ENCODE measurements at regions of chr10 and their contacts with region 1.

Region 1: DNA sequence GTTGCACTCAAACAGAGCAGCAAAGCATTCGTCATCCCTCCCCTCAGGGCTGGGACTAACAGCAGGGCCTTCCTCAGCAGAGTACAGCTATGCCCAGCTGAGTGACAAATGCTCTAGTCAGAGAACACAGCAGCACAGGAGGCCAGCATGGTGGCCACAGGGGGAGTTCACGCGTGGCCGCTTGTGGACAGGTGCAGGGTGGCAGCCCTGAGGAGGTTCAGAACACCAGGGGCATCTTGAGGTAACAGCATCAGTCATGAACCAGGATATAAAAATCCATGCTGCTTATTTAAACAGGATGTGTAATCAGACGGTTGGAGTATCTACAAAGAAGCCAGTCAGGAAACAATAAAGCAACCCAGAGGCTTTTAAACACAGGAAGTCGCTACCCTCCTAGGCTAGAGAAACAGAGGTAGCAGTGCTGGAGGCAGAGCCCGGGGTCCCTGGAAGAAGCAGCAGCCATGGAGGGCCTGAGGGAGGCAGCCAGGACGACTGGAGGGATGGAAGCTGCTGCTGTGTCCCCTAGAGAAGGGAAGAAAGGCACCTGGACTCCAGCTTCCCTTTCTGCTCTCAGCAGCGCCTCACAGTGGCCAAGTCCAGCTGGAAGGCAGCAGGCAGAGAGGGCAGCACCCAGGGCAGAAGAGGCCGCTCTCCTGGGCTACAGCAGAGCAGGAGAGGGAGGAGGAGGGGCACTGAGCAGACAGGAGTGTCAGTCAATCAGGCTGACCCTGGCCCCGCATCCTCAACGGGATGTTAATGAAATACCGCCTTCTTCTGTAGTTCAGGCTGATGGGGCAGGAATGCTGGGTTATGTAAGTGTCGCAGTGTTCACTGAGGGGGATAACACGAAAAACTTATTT is 70.8 kb upstream of the UCN3 start:
- DNase-seq: no peak
- ATAC-seq: peak; percentile 73
- H3K4me3 ChIP-seq: no peak overlapping the region
- H3K27ac ChIP-seq: no peak overlapping the region
- H3K4me1 ChIP-seq: no peaks in the 10 kb centered on the region
- H3K27me3 ChIP-seq: no peaks in the 10 kb centered on the region
- CTCF ChIP-seq: peak; percentile 35 to 45 (median 38); a peak in 5 of 6 replicates
- EP300 ChIP-seq: no peak
- POLR2A ChIP-seq: no peak
- RAD21 ChIP-seq: no peak

Region 2: DNA sequence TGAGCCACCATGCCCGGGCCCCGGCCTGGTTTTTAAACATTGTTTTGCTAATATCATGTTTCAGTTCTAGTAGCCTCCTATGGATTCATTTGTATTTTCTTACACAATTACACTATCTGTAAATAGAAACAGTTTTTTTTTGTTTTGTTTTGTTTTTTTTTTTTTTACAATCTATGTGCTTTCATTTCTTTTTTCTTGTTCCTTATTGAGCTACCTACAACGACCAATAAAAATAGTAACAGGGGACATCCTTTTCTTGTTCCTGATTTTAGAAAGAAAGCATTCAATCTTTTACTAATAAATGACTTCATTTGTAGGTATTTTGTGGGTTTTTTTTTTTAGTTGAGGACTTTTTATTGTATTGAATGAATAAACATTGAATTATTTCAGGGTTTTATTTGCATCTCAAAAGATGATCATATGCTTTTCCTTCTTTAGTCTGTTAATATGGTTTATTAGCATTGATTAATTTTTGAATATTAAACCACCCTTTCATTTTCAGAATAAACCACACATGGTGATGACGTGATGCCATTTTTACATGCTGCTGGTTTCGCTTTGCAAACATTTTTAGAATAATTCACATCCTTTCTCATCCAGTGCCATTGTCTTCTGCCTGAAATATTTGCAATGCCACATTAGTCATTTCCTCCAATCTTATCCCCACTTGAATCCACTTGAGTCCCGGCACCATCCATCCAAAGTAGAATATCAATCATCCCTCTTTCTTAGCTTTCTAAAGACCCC is 486.0 kb before region 1 on chr10:
- CTCF ChIA-PET with region 1: no interaction called
- POLR2A ChIA-PET with region 1: no interaction called
- RAD21 ChIA-PET with region 1: no interaction called
- SMC1A ChIA-PET with region 1: no interaction called
- in situ Hi-C with region 1: no loop called
- intact Hi-C with region 1: no loop called
- DNase-seq: no peak
- ATAC-seq: peak; percentile 38; the same call in 2 of the 3 replicates
- H3K4me3 ChIP-seq: no peak overlapping the region
- H3K27ac ChIP-seq: no peak overlapping the region
- H3K4me1 ChIP-seq: no peaks in the 10 kb centered on the region
- H3K27me3 ChIP-seq: no peaks in the 10 kb centered on the region
- CTCF ChIP-seq: no peak
- EP300 ChIP-seq: no peak
- POLR2A ChIP-seq: no peak
- RAD21 ChIP-seq: no peak

Region 3: GRCh38 chr10:5043716-5044115 is 250.2 kb before region 1 on chr10:
- CTCF ChIA-PET with region 1: no interaction called
- POLR2A ChIA-PET with region 1: no interaction called
- RAD21 ChIA-PET with region 1: no interaction called
- SMC1A ChIA-PET with region 1: no interaction called
- in situ Hi-C with region 1: no loop called
- intact Hi-C with region 1: no loop called
- DNase-seq: no peak
- ATAC-seq: no peak
- H3K4me3 ChIP-seq: no peak overlapping the region
- H3K27ac ChIP-seq: no peak overlapping the region
- H3K4me1 ChIP-seq: no peaks in the 10 kb centered on the region
- H3K27me3 ChIP-seq: no peaks in the 10 kb centered on the region
- CTCF ChIP-seq: no peak
- EP300 ChIP-seq: no peak
- POLR2A ChIP-seq: no peak
- RAD21 ChIP-seq: no peak

Region 4: DNA sequence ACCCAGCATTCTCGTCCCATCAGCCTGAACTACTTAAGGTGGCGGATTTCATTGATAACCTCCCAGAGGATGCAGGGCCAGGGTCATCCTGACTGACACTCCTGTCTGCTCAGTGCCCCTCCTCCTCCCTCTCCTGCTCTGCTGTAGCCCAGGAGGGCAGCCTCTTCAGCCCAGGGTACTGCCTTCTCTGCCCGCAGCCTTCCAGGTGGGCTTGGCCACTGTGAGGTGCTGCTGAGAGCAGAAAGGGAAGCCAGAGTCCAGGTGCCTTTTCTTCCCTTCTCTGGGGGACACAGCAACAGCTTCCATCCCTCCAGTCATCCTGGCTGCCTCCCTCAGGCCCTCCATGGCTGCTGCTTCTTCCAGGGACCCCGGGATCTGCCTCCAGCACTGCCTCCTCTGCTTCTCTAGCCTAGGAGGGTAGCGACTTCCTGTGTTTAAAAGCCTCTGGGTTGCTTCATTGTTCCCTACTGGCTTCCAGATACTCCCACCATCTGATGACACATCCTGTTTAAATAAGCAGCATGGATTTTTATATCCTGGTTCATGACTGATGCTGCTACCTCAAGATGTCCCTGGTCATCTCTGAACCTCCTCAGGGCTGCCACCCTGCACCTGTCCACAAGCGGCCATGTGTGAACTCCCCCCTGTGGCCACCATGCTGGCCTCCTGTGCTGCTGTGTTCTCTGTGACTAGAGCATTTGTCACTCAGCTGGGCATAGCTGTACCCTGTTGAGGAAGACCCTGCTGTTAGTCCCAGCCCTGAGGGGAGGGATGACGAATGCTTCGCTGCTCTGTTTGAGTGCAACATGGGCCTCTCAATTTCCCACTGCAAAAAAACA is 41.5 kb before region 1 on chr10:
- CTCF ChIA-PET with region 1: no interaction called
- POLR2A ChIA-PET with region 1: no interaction called
- RAD21 ChIA-PET with region 1: no interaction called
- SMC1A ChIA-PET with region 1: no interaction called
- in situ Hi-C with region 1: loop called (anchors 5 kb)
- intact Hi-C with region 1: no loop called
- DNase-seq: no peak
- ATAC-seq: no peak
- H3K4me3 ChIP-seq: no peak overlapping the region
- H3K27ac ChIP-seq: no peak overlapping the region
- H3K4me1 ChIP-seq: no peaks in the 10 kb centered on the region
- H3K27me3 ChIP-seq: no peaks in the 10 kb centered on the region
- CTCF ChIP-seq: no peak
- EP300 ChIP-seq: no peak
- POLR2A ChIP-seq: no peak
- RAD21 ChIP-seq: no peak

Region 5: DNA sequence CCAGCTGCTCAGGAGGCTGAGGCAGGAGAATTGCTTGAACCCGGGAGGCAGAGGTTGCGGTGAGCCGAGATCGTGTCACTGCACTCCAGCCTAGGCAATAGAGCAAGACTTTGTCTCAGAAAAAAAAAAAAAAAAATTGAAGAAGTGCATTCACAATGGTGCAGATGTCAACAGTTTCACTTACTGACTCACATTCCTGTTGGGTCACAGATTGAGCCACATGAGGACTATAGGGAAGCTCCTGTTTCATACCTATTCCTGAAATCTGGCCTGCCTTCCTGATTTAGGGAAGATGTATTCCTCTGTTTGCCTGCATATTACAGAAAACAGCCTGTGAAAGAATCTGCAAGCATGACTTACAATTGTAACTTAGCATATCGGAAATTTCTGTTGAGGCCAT is 19.1 kb before region 1 on chr10:
- CTCF ChIA-PET with region 1: no interaction called
- POLR2A ChIA-PET with region 1: no interaction called
- RAD21 ChIA-PET with region 1: no interaction called
- SMC1A ChIA-PET with region 1: no interaction called
- in situ Hi-C with region 1: no loop called
- intact Hi-C with region 1: no loop called
- DNase-seq: no peak
- ATAC-seq: no peak
- H3K4me3 ChIP-seq: no peak overlapping the region
- H3K27ac ChIP-seq: no peak overlapping the region
- H3K4me1 ChIP-seq: no peaks in the 10 kb centered on the region
- H3K27me3 ChIP-seq: no peaks in the 10 kb centered on the region
- CTCF ChIP-seq: no peak
- EP300 ChIP-seq: no peak
- POLR2A ChIP-seq: no peak
- RAD21 ChIP-seq: no peak

Region 6: GRCh38 chr10:5325076-5325475 is 31.2 kb after region 1 on chr10:
- CTCF ChIA-PET with region 1: no interaction called
- POLR2A ChIA-PET with region 1: no interaction called
- RAD21 ChIA-PET with region 1: no interaction called
- SMC1A ChIA-PET with region 1: no interaction called
- in situ Hi-C with region 1: no loop called
- intact Hi-C with region 1: no loop called
- DNase-seq: no peak
- ATAC-seq: no peak
- H3K4me3 ChIP-seq: no peak overlapping the region
- H3K27ac ChIP-seq: no peak overlapping the region
- H3K4me1 ChIP-seq: no peaks in the 10 kb centered on the region
- H3K27me3 ChIP-seq: no peaks in the 10 kb centered on the region; a peak in 1 of 4 replicates
- CTCF ChIP-seq: no peak
- EP300 ChIP-seq: no peak
- POLR2A ChIP-seq: no peak
- RAD21 ChIP-seq: no peak

Measured in GM12878 (cell line).